ENCODE measurements at regions of chr14 and their contacts with region 1.

Region 1: GRCh38 chr14:59254146-59254941 is 65.9 kb downstream of the DAAM1 start:
- DNase-seq: peak; percentile 60 to 89
- ATAC-seq: peak; percentile 84 to 94 (median 90)
- H3K4me3 ChIP-seq: peak overlapping the region in 1 of 10 donors; percentile 11
- H3K27ac ChIP-seq: peak overlapping the region; percentile 74 to 94 (median 86)
- H3K4me1 ChIP-seq: peaks cover 10 to 85% (median 59%) of the 10 kb centered on the region in 9 donors
- H3K27me3 ChIP-seq: no peaks in the 10 kb centered on the region
- CTCF ChIP-seq: peak in 2 of 9 donors; percentile 14 to 30

Region 2: DNA sequence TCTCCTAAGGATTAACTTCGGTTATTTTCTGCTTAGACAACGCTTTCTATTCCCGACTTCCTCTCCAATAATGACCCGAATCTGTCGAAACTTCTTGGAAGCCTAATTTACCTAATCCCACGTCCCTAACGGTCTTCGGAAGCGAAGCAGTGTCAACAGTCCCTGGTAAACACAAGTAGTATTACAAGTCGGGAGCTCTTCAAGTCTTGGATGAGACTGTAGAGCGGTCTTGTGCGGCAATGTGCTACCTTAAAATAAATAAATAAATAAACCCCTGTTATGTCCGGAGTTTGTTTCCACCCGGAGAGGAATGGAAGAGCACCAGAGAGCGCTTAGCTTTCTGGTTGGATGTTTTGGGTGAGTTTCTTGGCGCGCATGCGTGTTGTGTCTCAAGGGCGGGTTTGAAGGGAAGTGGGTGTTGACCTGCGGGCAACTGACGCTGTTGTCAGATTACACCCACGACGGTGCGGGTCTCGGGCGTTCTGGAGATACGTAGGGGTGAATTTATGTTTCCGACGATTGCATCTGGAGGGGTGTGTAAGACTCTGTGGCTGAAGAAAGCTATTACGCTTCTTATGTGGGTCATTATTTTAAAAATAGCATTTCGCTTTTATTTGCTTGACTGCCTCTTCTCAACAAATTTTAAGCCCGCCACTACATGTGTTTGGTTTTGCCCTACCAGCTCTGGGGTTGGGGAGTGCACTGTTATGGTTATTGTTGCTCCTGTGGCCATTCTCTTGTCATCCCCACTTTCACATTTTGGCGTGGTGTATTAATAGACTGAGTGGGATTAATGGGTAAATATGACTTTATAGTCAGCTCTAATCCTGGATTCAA is 826.8 kb before region 1 on chr14 and contains the starts of genes KIAA0586 and TIMM9:
- intact Hi-C with region 1: loop called in 1 of 10 experiments (anchors 10 kb)
- DNase-seq: peak; percentile 94 to 97
- ATAC-seq: peak; percentile 97 to 99 (median 98)
- H3K4me3 ChIP-seq: peak within 1 kb of the TSS; percentile 75 to 96 (median 81)
- H3K27ac ChIP-seq: peak within 1 kb of the TSS; percentile 69 to 99 (median 91)
- H3K4me1 ChIP-seq: peaks cover 0 to 41% (median 23%) of the 10 kb centered on the region in 9 donors
- H3K27me3 ChIP-seq: no peaks in the 10 kb centered on the region
- CTCF ChIP-seq: peak in 1 of 9 donors; percentile 3
- total RNA-seq, gene KIAA0586: 8.0 to 15.9 (median 12.4) TPM
- total RNA-seq, gene TIMM9: 24.6 to 39.3 (median 26.3) TPM

Region 3: GRCh38 chr14:59199205-59199604 is 55.1 kb before region 1 on chr14:
- intact Hi-C with region 1: loop called in 5 of 10 experiments (anchors 5 to 10 kb)
- DNase-seq: no peak
- ATAC-seq: no peak
- H3K4me3 ChIP-seq: no peak overlapping the region
- H3K27ac ChIP-seq: peak overlapping the region in 3 of 10 donors; percentile 29 to 72 (median 32)
- H3K4me1 ChIP-seq: peaks cover 12 to 95% (median 62%) of the 10 kb centered on the region in 9 donors
- H3K27me3 ChIP-seq: no peaks in the 10 kb centered on the region
- CTCF ChIP-seq: no peak